Thyroid gland (tissue), 4 donors: ENCODE measurements at regions of chr17 and their contacts with region 1.

Region 1: DNA sequence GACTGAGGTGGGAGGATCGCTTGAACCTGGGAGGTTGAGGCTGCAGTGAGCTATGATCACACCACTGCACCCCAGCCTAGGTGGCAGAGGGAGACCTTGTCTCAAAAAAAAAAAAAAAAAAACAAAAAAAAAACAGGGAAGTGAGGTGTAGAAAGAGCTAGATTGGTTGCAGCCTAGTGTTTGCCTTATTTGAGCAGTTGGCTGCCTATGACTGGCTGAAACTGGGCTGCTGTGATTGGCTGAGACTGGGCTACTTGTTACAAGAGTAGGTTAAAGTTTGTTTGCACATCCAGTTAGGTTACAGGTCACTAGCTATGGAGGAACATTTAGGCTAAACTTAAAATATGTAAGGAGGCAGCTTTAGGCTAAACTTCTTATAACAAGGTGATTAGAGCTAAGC is 5.7 kb downstream of the DHRS7B start:
- DNase-seq: no peak
- H3K4me3 ChIP-seq: no peak overlapping the region
- H3K27ac ChIP-seq: no peak overlapping the region
- H3K4me1 ChIP-seq: peaks cover 6 to 8% of the 10 kb centered on the region in 2 donors
- H3K27me3 ChIP-seq: no peaks in the 10 kb centered on the region
- CTCF ChIP-seq: no peak
- POLR2A ChIP-seq: no peak

Region 2: DNA sequence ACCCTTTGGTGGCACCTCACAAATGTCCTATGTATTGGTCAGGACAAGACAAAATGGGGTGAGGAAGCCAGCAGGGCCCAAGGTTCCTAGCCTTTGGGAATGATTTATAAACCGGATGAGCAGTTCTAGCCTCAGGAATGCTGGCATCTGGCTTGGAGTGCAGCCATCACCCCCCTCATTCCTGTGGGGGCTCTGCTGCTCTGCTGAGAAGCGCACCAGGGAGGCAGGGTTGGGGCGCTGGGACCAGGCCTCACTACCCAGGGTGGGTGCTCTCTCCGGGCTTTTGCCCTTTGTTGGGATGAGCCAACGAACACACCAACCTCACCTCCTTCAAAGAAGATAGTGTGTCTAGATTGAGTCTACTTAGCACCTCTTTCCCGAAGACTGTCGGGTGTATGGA is 42.3 kb after region 1 on chr17:
- intact Hi-C with region 1: loop called (anchors 5 kb)
- DNase-seq: peak in 1 of 2 donors; percentile 49
- H3K4me3 ChIP-seq: no peak overlapping the region
- H3K27ac ChIP-seq: peak overlapping the region; percentile 8 to 50 (median 48)
- H3K4me1 ChIP-seq: peaks cover 13 to 19% of the 10 kb centered on the region in 2 donors
- H3K27me3 ChIP-seq: no peaks in the 10 kb centered on the region
- CTCF ChIP-seq: no peak
- POLR2A ChIP-seq: no peak